ENCODE measurements at regions of chr1 and their contacts with region 1.

Region 1: DNA sequence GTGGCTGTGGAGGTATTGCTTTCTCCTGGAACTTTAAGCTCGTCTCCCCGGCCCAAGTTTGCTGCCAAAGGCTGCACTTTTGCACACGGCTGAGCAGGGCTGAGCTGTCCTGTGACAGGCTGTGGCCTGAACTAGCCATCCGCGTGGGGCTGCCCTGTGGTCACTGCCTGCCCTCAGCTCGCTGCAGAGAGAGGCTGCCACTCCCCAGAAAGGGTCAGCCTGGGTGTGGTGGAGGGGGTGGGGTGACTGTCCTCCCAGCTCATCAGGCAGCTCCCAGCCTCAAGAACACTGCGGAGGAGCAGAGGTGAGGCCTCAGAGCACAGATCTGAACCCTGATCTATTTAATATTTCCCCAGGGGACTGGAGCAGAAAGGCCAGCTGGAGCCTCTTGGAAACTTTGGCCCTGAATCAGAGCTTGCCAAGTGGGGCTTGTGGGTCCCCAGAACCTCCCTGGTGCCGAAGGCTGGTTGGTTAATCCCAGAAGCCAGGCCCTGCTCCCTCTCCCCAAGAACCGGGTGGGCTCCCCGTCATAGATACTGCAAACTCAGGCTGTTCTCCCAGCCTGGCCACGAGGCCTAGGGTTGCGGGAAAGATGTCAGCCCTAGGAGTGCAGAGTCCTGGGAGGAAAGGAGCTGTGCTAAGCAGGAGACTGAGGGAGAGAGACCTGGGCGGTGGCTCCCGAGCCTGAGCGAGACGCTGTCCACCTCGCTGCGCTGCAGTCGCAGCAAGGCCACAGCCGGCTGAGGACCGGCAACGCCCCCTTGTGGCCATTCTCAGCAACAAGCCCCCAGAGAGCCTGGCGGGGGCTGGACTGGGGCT is 125.1 kb upstream of the IPO9 start:
- DNase-seq: peak; percentile 55
- ATAC-seq: peak; percentile 95
- H3K4me3 ChIP-seq: peak overlapping the region in 1 of 2 experiments; percentile 12; a peak in 1 of 4 replicates
- H3K27ac ChIP-seq: peak overlapping the region; percentile 55; the same call in 1 of the 2 replicates
- H3K4me1 ChIP-seq: peaks cover 9% of the 10 kb centered on the region
- H3K27me3 ChIP-seq: no peaks in the 10 kb centered on the region
- CTCF ChIP-seq: peak; percentile 97

Region 2: DNA sequence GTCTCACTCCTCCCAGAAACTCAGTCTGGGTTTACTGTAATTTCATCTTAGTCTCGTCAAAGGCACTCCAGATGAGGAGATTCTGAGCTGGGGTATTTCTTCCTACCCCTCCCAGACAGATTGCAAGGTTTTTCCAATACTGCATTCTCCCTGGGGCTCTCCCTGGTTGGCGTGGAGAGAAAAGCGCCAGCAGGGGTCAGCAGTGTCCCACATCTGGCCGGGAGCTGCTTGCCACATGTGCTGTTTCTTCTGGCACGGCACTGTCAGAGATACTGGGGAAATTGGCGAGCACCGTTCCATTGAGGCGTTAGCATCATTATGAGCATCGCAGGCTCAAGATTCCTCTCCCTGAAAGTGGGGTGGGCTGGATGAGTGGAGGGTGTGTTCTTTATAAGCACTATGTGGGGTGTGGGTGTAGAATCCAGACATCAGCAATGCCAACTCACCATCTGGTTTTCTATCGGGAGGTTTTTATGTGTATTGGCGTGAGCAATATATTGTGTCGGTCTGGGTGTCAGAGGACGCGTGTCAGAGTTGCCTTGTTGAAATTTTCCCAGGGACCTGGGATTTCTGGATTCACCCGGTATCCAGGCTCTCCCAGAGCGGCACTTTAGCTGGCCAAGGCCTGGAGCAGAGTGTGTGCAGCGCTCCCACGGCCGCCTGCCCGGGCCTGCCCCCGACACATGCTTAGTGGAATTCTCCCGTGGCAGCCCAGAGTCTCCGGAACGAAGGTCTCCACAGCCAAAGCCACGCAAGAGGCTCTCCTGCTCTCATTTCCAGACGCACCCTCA is 172.9 kb before region 1 on chr1:
- CTCF ChIA-PET with region 1: no interaction called
- POLR2A ChIA-PET with region 1: no interaction called
- in situ Hi-C with region 1: no loop called
- intact Hi-C with region 1: loop called (anchors 1 kb)
- DNase-seq: no peak
- ATAC-seq: peak; percentile 94
- H3K4me3 ChIP-seq: no peak overlapping the region
- H3K27ac ChIP-seq: no peak overlapping the region
- H3K4me1 ChIP-seq: peaks cover 11% of the 10 kb centered on the region
- H3K27me3 ChIP-seq: no peaks in the 10 kb centered on the region
- CTCF ChIP-seq: peak; percentile 93

Region 3: DNA sequence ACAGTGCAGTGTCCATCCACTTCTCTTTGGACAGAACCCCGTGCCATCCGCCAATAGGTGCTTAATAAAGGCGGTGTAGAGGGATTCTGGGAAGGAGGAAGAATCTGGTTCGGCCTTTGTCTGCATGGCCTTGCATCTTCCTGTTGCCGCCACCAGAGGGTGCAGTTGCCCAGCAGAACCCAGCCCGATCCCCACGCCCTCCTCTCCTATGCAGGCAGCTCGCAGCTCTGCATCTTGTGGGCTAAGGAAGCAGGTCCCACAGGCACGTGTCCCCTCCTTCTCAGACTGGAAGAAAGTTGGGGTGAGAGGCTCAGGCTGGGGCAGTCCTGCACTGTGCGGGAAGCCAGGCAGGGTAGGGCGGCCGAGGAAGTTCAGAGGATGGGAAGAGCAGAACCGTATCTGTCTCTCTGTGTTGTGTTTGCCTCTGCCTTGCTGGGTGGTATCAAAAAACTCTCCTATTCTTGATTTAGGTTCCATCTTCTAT is 144.1 kb before region 1 on chr1:
- CTCF ChIA-PET with region 1: interaction called, 21 read pairs
- POLR2A ChIA-PET with region 1: no interaction called
- in situ Hi-C with region 1: no loop called
- intact Hi-C with region 1: loop called (anchors 1 kb)
- DNase-seq: peak; percentile 63
- ATAC-seq: peak; percentile 98
- H3K4me3 ChIP-seq: no peak overlapping the region
- H3K27ac ChIP-seq: no peak overlapping the region
- H3K4me1 ChIP-seq: no peaks in the 10 kb centered on the region
- H3K27me3 ChIP-seq: no peaks in the 10 kb centered on the region
- CTCF ChIP-seq: peak; percentile 92

Region 4: DNA sequence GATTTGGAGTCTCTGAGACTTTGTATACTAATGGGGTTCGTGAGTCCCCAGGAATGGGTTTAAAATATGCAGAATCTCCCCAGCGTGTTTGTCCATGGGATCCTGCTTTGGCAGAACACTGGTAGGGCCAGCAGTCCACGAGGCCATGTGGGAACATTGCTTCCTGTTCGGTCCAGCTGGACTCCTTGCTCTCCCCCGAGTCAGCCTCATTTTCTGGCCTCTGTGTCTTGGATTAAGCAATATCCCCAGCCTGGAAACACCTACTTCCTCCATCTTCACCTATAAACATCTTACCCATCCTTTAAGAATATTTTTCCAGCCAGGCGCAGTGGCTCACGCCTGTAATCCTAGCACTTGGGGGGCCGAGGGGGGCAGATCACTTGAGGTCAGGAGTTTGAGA is 22.5 kb before region 1 on chr1:
- CTCF ChIA-PET with region 1: interaction called, 10 read pairs
- POLR2A ChIA-PET with region 1: no interaction called
- in situ Hi-C with region 1: no loop called
- intact Hi-C with region 1: no loop called
- DNase-seq: no peak
- ATAC-seq: no peak
- H3K4me3 ChIP-seq: no peak overlapping the region
- H3K27ac ChIP-seq: no peak overlapping the region
- H3K4me1 ChIP-seq: no peaks in the 10 kb centered on the region
- H3K27me3 ChIP-seq: no peaks in the 10 kb centered on the region
- CTCF ChIP-seq: no peak

Measured in Panc1 (cell line).